Activated naive CD4-positive, alpha-beta T cell treated with anti-CD3 and anti-CD28 coated beads for 36 hours (primary cell): ENCODE measurements at regions of chr12 and their contacts with region 1.

Region 1: GRCh38 chr12:53352331-53353256 is 16.4 kb upstream of the SP7 start:
- DNase-seq: peak; percentile 94
- H3K4me3 Mint-ChIP-seq: no peak overlapping the region
- H3K27ac Mint-ChIP-seq: no peak overlapping the region
- H3K4me1 Mint-ChIP-seq: peaks cover 6% of the 10 kb centered on the region
- H3K27me3 Mint-ChIP-seq: no peaks in the 10 kb centered on the region

Region 2: DNA sequence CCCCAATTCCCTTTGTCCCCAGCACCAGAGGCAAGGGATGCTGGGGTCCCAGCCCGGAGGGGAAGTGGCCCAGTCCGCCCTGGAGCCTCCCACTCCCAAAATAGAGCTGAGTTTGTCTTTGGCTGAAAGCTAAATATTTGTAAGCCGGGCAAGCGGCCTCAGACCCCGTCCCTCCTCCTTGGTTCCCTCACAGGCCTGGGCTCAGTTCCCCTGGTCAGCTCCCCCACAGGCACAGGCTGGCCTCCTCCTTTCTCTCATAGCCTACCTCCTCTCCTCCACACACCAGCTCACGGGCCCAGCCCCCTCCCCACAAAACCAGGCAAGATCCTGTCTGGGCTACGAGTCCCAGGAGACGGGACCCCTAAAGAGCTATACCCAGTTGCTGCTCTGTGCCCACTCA is 17.8 kb before region 1 on chr12:
- CTCF ChIA-PET with region 1: interaction called, 196 read pairs
- intact Hi-C with region 1: no loop called
- DNase-seq: no peak
- H3K4me3 Mint-ChIP-seq: no peak overlapping the region
- H3K27ac Mint-ChIP-seq: no peak overlapping the region
- H3K4me1 Mint-ChIP-seq: no peaks in the 10 kb centered on the region
- H3K27me3 Mint-ChIP-seq: peaks cover 37% of the 10 kb centered on the region

Region 3: GRCh38 chr12:53391729-53392128 is 39.1 kb after region 1 on chr12:
- CTCF ChIA-PET with region 1: interaction called, 24 read pairs
- intact Hi-C with region 1: no loop called
- DNase-seq: no peak
- H3K4me3 Mint-ChIP-seq: no peak overlapping the region
- H3K27ac Mint-ChIP-seq: peak overlapping the region; percentile 46
- H3K4me1 Mint-ChIP-seq: peaks cover 45% of the 10 kb centered on the region
- H3K27me3 Mint-ChIP-seq: no peaks in the 10 kb centered on the region

Region 4: GRCh38 chr12:53427905-53428594 is 75.5 kb after region 1 on chr12:
- CTCF ChIA-PET with region 1: interaction called, 163 read pairs
- intact Hi-C with region 1: no loop called
- DNase-seq: peak; percentile 63
- H3K4me3 Mint-ChIP-seq: no peak overlapping the region
- H3K27ac Mint-ChIP-seq: no peak overlapping the region
- H3K4me1 Mint-ChIP-seq: peaks cover 11% of the 10 kb centered on the region
- H3K27me3 Mint-ChIP-seq: no peaks in the 10 kb centered on the region

Region 5: DNA sequence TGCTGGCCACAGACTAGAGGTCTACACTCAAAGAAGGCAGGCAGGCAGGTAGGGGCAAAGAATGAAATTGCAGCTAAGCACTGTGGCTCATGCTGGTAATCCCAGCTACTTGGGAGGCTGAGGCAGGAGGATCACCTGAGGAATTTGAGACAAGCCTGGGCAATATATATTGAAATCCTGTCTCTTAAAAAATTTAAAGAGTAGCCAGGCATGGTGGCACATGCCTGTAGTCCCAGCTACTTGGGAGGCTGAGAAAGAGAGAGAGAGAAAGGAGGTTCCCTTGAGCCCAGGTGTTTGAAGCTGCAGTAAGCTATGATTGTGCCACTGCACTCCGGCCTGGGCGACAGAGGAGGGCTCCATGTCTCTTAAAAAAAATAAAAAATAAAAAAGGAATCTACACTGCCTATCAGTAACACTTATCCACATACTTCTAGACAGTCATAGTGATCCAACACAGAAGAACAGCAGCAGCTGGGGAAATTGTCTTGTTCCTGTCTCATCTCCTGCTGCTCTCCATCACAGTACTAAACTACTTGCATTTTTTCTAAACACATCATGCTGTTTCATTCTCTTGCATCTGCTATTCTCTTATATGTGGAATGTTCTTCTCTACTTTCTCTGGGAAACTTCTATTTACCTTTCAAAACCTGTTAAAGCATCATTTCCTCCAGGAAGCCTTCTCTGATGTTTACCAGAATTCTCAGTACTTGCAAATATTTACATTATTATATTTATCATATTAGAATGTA is 216.4 kb after region 1 on chr12:
- CTCF ChIA-PET with region 1: no interaction called
- intact Hi-C with region 1: no loop called
- DNase-seq: no peak
- H3K4me3 Mint-ChIP-seq: no peak overlapping the region
- H3K27ac Mint-ChIP-seq: no peak overlapping the region
- H3K4me1 Mint-ChIP-seq: peaks cover 57% of the 10 kb centered on the region
- H3K27me3 Mint-ChIP-seq: no peaks in the 10 kb centered on the region